Endothelial cell of umbilical vein (primary cell): ENCODE measurements at regions of chr13 and their contacts with region 1.

Region 1: DNA sequence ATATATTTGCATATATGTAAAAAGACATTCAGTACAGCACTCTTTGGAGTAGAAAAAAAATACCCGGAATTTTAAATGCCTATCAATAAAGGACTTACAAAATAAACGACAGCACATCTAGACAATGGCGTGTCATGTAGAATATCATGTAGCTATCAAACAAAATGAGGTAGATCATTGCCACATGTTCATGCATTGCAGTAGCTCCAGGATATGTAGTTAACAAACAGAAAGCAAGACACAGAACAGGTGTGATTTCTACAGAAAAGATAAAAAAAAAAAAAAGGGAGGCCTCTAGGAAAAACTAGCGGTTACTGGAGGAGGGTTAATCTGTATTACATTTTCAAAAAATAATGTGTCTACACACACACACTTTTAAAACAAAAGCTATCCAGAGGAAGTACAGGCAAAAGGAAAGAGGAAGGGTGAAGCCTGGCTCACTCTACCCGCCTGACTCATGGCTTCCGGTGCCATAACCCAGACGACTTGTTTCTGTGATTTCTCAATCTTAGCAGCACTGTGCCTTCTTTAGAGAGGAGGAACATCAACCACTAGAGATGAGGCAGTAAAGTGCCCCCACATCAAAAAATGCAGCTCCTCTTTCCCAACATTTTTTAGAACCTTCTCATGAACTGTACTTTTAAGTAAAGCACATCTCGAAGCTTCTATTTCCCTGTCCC is 6.9 kb downstream of the KCTD12 start:
- DNase-seq: peak; percentile 96
- H3K4me3 ChIP-seq: peak overlapping the region in 1 of 3 experiments; percentile 39
- H3K27ac ChIP-seq: peak overlapping the region; percentile 98
- H3K4me1 ChIP-seq: peaks cover 55% of the 10 kb centered on the region
- H3K27me3 ChIP-seq: no peaks in the 10 kb centered on the region
- CTCF ChIP-seq: no peak
- POLR2A ChIP-seq: peak; percentile 80

Region 2: GRCh38 chr13:76552041-76552772 is 327.1 kb before region 1 on chr13:
- CTCF ChIA-PET with region 1: no interaction called
- POLR2A ChIA-PET with region 1: interaction called, 7 read pairs
- dilution Hi-C with region 1: no loop called
- intact Hi-C with region 1: loop called (anchors 2 kb)
- DNase-seq: peak; percentile 88
- H3K4me3 ChIP-seq: peak overlapping the region in 1 of 3 experiments; percentile 7
- H3K27ac ChIP-seq: peak overlapping the region; percentile 80
- H3K4me1 ChIP-seq: peaks cover 10% of the 10 kb centered on the region
- H3K27me3 ChIP-seq: no peaks in the 10 kb centered on the region
- CTCF ChIP-seq: no peak
- POLR2A ChIP-seq: no peak

Region 3: DNA sequence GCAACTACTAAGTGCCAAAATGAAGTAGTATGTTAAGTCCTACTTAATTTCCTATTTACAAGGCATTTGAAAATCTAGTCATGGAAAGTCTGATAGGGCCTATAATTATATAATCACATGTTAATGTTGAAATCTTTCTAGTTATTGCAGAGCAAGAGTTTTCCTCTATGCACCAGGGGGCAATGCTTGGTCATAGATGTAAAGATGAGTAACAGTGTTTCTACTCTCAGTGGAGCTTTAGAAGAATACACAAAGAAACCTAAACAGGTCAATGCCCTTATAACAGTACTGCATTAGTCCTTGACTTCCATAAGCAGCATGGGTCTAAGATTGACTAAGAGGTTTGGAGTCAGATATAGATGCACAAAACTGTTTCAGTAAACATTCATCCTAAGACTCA is 211.8 kb before region 1 on chr13:
- CTCF ChIA-PET with region 1: interaction called, 145 read pairs
- POLR2A ChIA-PET with region 1: interaction called, 11 read pairs
- dilution Hi-C with region 1: no loop called
- intact Hi-C with region 1: loop called (anchors 1 kb)
- DNase-seq: peak; percentile 89
- H3K4me3 ChIP-seq: no peak overlapping the region
- H3K27ac ChIP-seq: no peak overlapping the region
- H3K4me1 ChIP-seq: no peaks in the 10 kb centered on the region
- H3K27me3 ChIP-seq: no peaks in the 10 kb centered on the region
- CTCF ChIP-seq: peak; percentile 21 to 39
- POLR2A ChIP-seq: no peak

Region 4: GRCh38 chr13:76723551-76724232 is 155.7 kb before region 1 on chr13:
- CTCF ChIA-PET with region 1: interaction called, 29 read pairs
- POLR2A ChIA-PET with region 1: interaction called, 13 read pairs
- dilution Hi-C with region 1: no loop called
- intact Hi-C with region 1: loop called (anchors 1 kb)
- DNase-seq: peak; percentile 95
- H3K4me3 ChIP-seq: no peak overlapping the region
- H3K27ac ChIP-seq: peak overlapping the region; percentile 81
- H3K4me1 ChIP-seq: peaks cover 32% of the 10 kb centered on the region
- H3K27me3 ChIP-seq: no peaks in the 10 kb centered on the region
- CTCF ChIP-seq: no peak
- POLR2A ChIP-seq: peak; percentile 15

Region 5: DNA sequence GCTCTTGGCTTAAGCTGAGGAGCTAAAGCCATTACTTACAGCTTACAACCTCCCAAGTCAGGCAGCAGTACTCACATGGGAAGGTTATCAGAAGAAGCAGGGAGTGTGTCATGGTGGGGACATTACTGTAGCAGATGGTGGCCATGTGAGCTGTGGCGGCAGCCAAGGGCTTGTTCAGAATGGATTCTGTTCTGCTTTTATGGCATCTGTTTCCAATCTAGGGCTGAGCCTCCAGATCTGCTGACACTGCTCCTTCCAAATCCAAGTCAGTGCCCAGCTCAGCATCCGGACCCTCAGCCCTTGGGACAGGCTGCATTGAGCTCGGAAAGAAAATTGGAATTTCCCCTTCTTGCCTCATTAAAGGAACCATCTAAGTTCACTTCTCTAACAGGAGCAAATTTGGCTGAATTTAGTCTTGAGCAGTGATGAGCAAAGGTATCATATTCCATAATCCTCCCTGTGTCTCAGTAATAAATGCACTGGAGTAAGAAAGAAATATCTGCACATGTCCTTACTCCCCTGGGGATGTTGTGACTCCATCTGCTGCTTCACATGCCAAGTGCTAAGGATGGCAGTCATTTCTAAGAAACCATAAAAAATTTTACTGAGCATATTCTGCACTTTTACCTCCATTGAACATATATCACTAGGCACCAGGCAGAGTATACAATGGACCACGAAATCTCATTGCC is 67.0 kb before region 1 on chr13:
- CTCF ChIA-PET with region 1: interaction called, 10 read pairs
- POLR2A ChIA-PET with region 1: no interaction called
- dilution Hi-C with region 1: no loop called
- intact Hi-C with region 1: loop called (anchors 2 kb)
- DNase-seq: no peak
- H3K4me3 ChIP-seq: no peak overlapping the region
- H3K27ac ChIP-seq: no peak overlapping the region
- H3K4me1 ChIP-seq: peaks cover 9% of the 10 kb centered on the region
- H3K27me3 ChIP-seq: no peaks in the 10 kb centered on the region
- CTCF ChIP-seq: no peak
- POLR2A ChIP-seq: no peak

Region 6: GRCh38 chr13:76822698-76823267 is 56.6 kb before region 1 on chr13:
- CTCF ChIA-PET with region 1: interaction called, 156 read pairs
- POLR2A ChIA-PET with region 1: interaction called, 3 read pairs
- dilution Hi-C with region 1: no loop called
- intact Hi-C with region 1: no loop called
- DNase-seq: peak; percentile 71
- H3K4me3 ChIP-seq: no peak overlapping the region
- H3K27ac ChIP-seq: no peak overlapping the region
- H3K4me1 ChIP-seq: no peaks in the 10 kb centered on the region
- H3K27me3 ChIP-seq: no peaks in the 10 kb centered on the region
- CTCF ChIP-seq: peak in 1 of 2 donors; percentile 8
- POLR2A ChIP-seq: no peak

Region 7: GRCh38 chr13:76868371-76868770 is 11.0 kb before region 1 on chr13:
- CTCF ChIA-PET with region 1: interaction called, 15 read pairs
- POLR2A ChIA-PET with region 1: no interaction called
- dilution Hi-C with region 1: no loop called
- intact Hi-C with region 1: loop called (anchors 1 kb)
- DNase-seq: peak; percentile 69
- H3K4me3 ChIP-seq: no peak overlapping the region
- H3K27ac ChIP-seq: no peak overlapping the region
- H3K4me1 ChIP-seq: peaks cover 49% of the 10 kb centered on the region
- H3K27me3 ChIP-seq: no peaks in the 10 kb centered on the region
- CTCF ChIP-seq: no peak
- POLR2A ChIP-seq: no peak